ENCODE measurements at regions of chr17 and their contacts with region 1.

Region 1: GRCh38 chr17:50129728-50130558 is at the start of gene SAMD14:
- DNase-seq: no peak
- ATAC-seq: peak; percentile 16
- H3K4me3 Mint-ChIP-seq: peak within 1 kb of the TSS; percentile 97
- H3K27ac Mint-ChIP-seq: no peak within 1 kb of the TSS
- H3K4me1 Mint-ChIP-seq: peaks cover 48% of the 10 kb centered on the region
- H3K27me3 Mint-ChIP-seq: peaks cover 26% of the 10 kb centered on the region
- CTCF ChIP-seq: no peak
- total RNA-seq, gene SAMD14: 4.5 to 6.0 TPM (median 5.9 TPM) in 3 replicates

Region 2: GRCh38 chr17:50064258-50065001 is 65.5 kb before region 1 on chr17:
- CTCF ChIA-PET with region 1: no interaction called
- POLR2A ChIA-PET with region 1: no interaction called
- DNase-seq: no peak
- ATAC-seq: peak; percentile 61
- H3K4me3 Mint-ChIP-seq: no peak overlapping the region
- H3K27ac Mint-ChIP-seq: peak overlapping the region; percentile 27; the same call in 1 of the 2 replicates
- H3K4me1 Mint-ChIP-seq: peaks cover 5% of the 10 kb centered on the region
- H3K27me3 Mint-ChIP-seq: no peaks in the 10 kb centered on the region
- CTCF ChIP-seq: no peak

Region 3: DNA sequence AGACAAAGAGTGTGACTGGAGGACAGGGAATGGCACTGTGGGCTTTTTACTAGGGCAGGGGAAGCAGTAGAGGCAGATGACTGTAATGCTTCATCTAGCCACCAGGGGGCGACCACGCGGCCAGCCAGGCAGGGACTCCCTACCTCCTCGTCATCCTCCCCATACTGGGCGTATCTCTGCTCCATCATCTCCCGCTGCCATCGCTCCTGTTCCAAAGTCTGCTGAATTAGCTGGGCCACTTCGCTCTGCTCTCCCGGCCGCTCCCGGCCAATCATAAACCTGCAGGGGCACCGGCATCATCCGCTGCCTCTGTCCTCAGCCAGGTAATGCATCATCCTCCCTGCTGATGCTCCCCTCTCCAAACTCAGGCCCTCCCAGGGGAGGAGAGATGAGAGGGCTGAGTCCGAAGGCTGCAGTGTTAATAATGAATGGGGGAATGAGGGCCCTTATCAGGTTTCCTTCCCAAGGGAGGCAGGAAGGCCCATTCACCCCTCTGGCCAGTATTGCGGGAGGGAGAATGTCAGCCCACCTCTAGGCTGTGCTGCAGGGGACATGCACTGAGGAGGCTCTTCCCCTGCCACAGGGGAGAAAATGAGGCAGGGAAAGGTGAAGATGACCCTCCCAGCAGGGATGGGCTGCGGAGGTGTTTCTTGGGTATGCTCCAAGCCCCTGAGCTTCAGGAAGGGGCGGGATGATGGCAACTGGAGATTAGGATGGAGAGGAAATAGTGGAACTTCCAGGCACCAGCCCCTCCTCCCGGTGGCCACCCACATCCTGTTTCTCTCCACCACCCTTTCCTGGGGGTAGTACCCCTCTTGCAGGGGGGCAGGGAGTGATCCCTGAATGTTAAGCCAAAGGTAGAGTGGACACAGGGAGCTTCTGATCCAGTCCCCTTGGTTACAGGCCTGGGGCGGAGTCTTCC is 10.3 kb after region 1 on chr17:
- CTCF ChIA-PET with region 1: interaction called, 22 read pairs
- POLR2A ChIA-PET with region 1: no interaction called
- DNase-seq: peak; percentile 90
- ATAC-seq: peak; percentile 91
- H3K4me3 Mint-ChIP-seq: 0 out of 2 replicates have a peak overlapping the region, but pooled peaks have one; percentile 14
- H3K27ac Mint-ChIP-seq: no peak overlapping the region
- H3K4me1 Mint-ChIP-seq: peaks cover 14% of the 10 kb centered on the region
- H3K27me3 Mint-ChIP-seq: no peaks in the 10 kb centered on the region
- CTCF ChIP-seq: peak; percentile 99

Region 4: GRCh38 chr17:50151041-50151936 is 21.3 kb after region 1 on chr17:
- CTCF ChIA-PET with region 1: interaction called, 18 read pairs
- POLR2A ChIA-PET with region 1: no interaction called
- DNase-seq: peak; percentile 92
- ATAC-seq: peak; percentile 58
- H3K4me3 Mint-ChIP-seq: peak overlapping the region; percentile 75
- H3K27ac Mint-ChIP-seq: peak overlapping the region; percentile 95
- H3K4me1 Mint-ChIP-seq: peaks cover 38% of the 10 kb centered on the region
- H3K27me3 Mint-ChIP-seq: peaks cover 19% of the 10 kb centered on the region
- CTCF ChIP-seq: no peak

Region 5: DNA sequence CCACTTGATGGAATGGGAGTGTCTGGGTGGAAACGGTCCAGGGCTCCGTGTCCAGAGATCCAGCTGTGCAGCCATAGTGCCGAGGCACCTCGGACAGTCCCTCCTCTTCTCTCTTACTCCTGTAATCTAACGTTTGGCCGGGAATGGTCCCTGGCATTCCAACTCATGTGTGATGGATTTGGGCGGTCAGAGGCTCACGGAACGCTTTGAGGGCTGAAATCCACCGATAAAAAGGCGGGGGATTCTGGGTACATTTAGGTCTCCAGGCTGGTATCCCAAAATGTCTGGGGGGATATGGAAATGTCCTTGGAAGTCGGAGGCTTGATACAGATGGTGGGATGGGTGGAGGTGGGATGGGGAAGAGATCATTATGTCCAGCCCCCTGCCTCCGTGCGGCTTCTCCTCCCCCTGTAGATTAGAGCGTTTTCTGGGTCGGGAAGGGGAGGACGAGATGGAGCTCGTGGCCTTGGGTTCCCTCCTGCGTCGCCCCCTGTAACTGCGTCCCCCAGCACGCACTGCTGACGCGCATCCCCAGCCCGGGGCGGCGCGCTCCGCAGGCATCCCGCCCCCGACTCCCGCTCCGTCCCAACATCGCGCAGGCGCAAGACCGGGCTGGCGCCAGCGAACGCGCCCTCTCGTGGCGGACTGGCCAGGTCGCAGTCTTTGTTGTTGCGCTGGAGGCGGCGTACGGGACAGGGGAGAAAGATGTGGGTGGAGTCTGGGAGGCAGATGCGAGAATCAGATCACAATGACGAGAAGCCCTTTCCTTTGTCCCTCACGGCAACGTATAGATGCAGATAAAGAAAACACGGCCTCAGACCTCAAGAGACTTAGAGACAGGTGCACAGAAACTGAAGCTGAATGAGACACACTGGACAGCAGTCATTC is 31.3 kb after region 1 on chr17:
- CTCF ChIA-PET with region 1: interaction called, 15 read pairs
- POLR2A ChIA-PET with region 1: interaction called, 3 read pairs
- DNase-seq: peak; percentile 96
- ATAC-seq: peak; percentile 92
- H3K4me3 Mint-ChIP-seq: peak overlapping the region; percentile 79
- H3K27ac Mint-ChIP-seq: peak overlapping the region; percentile 51
- H3K4me1 Mint-ChIP-seq: peaks cover 10% of the 10 kb centered on the region
- H3K27me3 Mint-ChIP-seq: peaks cover 33% of the 10 kb centered on the region
- CTCF ChIP-seq: peak; percentile 64

Region 6: GRCh38 chr17:50414808-50415207 is 284.9 kb after region 1 on chr17:
- CTCF ChIA-PET with region 1: no interaction called
- POLR2A ChIA-PET with region 1: no interaction called
- DNase-seq: no peak
- ATAC-seq: no peak
- H3K4me3 Mint-ChIP-seq: no peak overlapping the region
- H3K27ac Mint-ChIP-seq: no peak overlapping the region
- H3K4me1 Mint-ChIP-seq: 0 out of 2 replicates have a peak, but pooled peaks cover 3% of the 10 kb centered on the region
- H3K27me3 Mint-ChIP-seq: peaks cover 26% of the 10 kb centered on the region
- CTCF ChIP-seq: no peak

Region 7: GRCh38 chr17:50697663-50698274 is 567.8 kb after region 1 on chr17:
- CTCF ChIA-PET with region 1: no interaction called
- POLR2A ChIA-PET with region 1: no interaction called
- DNase-seq: no peak
- ATAC-seq: no peak
- H3K4me3 Mint-ChIP-seq: no peak overlapping the region
- H3K27ac Mint-ChIP-seq: no peak overlapping the region
- H3K4me1 Mint-ChIP-seq: no peaks in the 10 kb centered on the region
- H3K27me3 Mint-ChIP-seq: no peaks in the 10 kb centered on the region
- CTCF ChIP-seq: no peak

Measured in WTC11 (cell line).